ENCODE measurements at regions of chr4 and their contacts with region 1.

Region 1: GRCh38 chr4:146029939-146030710 is 91.5 kb upstream of the ZNF827 start:
- DNase-seq: peak; percentile 35
- ATAC-seq: peak; percentile 97
- H3K4me3 Mint-ChIP-seq: peak overlapping the region; percentile 63
- H3K27ac Mint-ChIP-seq: peak overlapping the region; percentile 86
- H3K4me1 Mint-ChIP-seq: peaks cover 51% of the 10 kb centered on the region
- H3K27me3 Mint-ChIP-seq: no peaks in the 10 kb centered on the region
- CTCF ChIP-seq: no peak

Region 2: GRCh38 chr4:145565328-145565727 is 464.8 kb before region 1 on chr4:
- CTCF ChIA-PET with region 1: no interaction called
- POLR2A ChIA-PET with region 1: no interaction called
- intact Hi-C with region 1: no loop called
- DNase-seq: no peak
- ATAC-seq: no peak
- H3K4me3 Mint-ChIP-seq: no peak overlapping the region
- H3K27ac Mint-ChIP-seq: no peak overlapping the region
- H3K4me1 Mint-ChIP-seq: no peaks in the 10 kb centered on the region
- H3K27me3 Mint-ChIP-seq: peaks cover 29% of the 10 kb centered on the region
- CTCF ChIP-seq: no peak

Region 3: DNA sequence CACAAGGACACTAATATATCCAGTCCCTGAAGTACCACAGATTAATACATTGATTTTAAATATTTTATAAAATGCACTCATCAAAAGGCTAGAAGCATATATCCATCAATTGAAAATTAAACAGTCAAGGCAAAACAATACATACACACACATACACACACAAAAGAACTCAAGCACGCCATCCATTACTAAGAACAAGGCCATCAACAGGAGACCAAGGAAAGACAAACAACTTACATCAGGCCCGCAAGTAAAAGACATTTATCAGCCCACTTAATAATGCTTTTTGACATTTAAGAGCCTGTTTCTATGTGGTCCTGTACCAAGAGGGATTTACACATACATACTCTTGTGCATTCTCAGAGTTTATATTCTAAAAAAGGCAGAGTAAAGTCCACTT is 41.5 kb before region 1 on chr4:
- CTCF ChIA-PET with region 1: no interaction called
- POLR2A ChIA-PET with region 1: no interaction called
- intact Hi-C with region 1: loop called (anchors 5 kb)
- DNase-seq: no peak
- ATAC-seq: no peak
- H3K4me3 Mint-ChIP-seq: no peak overlapping the region
- H3K27ac Mint-ChIP-seq: no peak overlapping the region
- H3K4me1 Mint-ChIP-seq: no peaks in the 10 kb centered on the region
- H3K27me3 Mint-ChIP-seq: no peaks in the 10 kb centered on the region
- CTCF ChIP-seq: no peak

Region 4: DNA sequence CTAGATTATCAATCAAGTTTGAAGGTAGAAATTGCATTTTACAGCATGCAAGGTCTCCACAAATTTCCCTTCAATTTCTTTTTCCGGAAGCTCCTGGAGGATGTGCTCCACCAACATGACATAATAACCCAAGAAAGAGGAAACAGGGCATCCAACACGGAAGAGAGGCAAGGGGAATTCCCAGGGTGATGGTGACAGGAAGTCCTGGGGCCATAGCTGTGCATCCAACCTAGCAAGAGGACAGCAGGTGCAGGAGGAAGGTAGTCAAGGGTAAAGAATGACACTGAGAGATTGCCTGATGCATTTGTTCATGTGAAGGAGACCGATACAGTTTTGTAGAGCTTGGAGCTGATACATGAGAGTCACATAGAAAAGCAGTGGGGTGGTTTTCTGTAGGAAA is 29.7 kb after region 1 on chr4:
- CTCF ChIA-PET with region 1: interaction called, 13 read pairs
- POLR2A ChIA-PET with region 1: interaction called, 34 read pairs
- intact Hi-C with region 1: loop called (anchors 1 kb)
- DNase-seq: peak; percentile 45
- ATAC-seq: peak; percentile 91
- H3K4me3 Mint-ChIP-seq: no peak overlapping the region
- H3K27ac Mint-ChIP-seq: no peak overlapping the region
- H3K4me1 Mint-ChIP-seq: peaks cover 39% of the 10 kb centered on the region
- H3K27me3 Mint-ChIP-seq: no peaks in the 10 kb centered on the region
- CTCF ChIP-seq: no peak

Region 5: DNA sequence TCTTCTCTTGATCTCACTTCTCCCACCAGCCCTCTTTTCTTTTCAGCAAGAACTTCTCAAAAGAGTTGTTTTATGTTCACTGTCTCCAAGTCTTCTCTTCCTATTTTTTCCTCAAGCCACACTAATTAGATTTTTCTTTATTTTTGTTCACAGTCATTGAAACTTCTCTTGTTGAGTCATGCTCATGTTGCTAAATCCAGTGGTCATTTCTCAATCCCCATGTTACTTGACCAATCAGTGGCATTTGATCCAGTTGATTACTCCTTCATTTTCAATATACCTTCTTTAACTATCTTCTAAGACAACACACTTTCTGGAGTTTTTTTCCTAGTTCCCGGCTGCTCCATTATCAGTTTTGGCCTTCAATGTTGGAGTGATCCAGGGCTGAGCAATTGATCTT is 42.3 kb after region 1 on chr4:
- CTCF ChIA-PET with region 1: no interaction called
- POLR2A ChIA-PET with region 1: no interaction called
- intact Hi-C with region 1: no loop called
- DNase-seq: no peak
- ATAC-seq: no peak
- H3K4me3 Mint-ChIP-seq: no peak overlapping the region
- H3K27ac Mint-ChIP-seq: no peak overlapping the region
- H3K4me1 Mint-ChIP-seq: no peaks in the 10 kb centered on the region
- H3K27me3 Mint-ChIP-seq: peaks cover 4% of the 10 kb centered on the region
- CTCF ChIP-seq: no peak

Region 6: GRCh38 chr4:146243141-146243882 is 213.2 kb after region 1 on chr4:
- CTCF ChIA-PET with region 1: no interaction called
- POLR2A ChIA-PET with region 1: no interaction called
- intact Hi-C with region 1: loop called (anchors 1 kb)
- DNase-seq: peak; percentile 33
- ATAC-seq: peak; percentile 78
- H3K4me3 Mint-ChIP-seq: no peak overlapping the region
- H3K27ac Mint-ChIP-seq: no peak overlapping the region
- H3K4me1 Mint-ChIP-seq: peaks cover 12% of the 10 kb centered on the region
- H3K27me3 Mint-ChIP-seq: no peaks in the 10 kb centered on the region
- CTCF ChIP-seq: no peak

Region 7: DNA sequence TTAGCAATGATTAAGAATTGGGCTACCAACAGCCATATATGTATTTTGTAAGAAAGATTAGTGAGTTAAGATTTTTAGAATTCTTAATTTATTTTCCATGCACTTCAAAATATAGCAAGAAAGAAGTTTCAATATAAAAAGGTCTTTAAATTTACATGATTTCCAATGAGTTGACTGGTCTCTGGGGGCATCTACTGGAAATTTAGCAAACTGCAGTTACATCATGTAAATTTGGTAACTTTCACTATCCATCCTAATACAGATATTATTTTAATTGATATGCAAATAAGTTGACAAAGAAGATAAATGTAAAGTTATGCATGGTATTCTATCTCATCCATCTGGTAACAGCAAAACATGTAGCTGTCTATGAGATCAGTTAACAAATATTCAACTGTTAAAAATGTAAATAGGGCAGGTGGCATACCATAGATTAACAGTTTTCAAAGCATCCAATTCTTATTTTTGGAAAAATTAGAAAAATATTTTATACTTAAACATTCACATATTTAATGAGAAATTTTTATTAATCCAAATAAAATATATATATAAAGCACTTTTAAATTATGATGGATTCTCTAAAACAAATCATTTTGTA is 886.5 kb after region 1 on chr4:
- CTCF ChIA-PET with region 1: interaction called, 3 read pairs
- POLR2A ChIA-PET with region 1: no interaction called
- intact Hi-C with region 1: loop called (anchors 1 kb)
- DNase-seq: no peak
- ATAC-seq: no peak
- H3K4me3 Mint-ChIP-seq: no peak overlapping the region
- H3K27ac Mint-ChIP-seq: no peak overlapping the region
- H3K4me1 Mint-ChIP-seq: no peaks in the 10 kb centered on the region
- H3K27me3 Mint-ChIP-seq: peaks cover 8% of the 10 kb centered on the region
- CTCF ChIP-seq: no peak

Measured in activated B cell treated with CpG ODN at 0.5 μM for 24 hours (primary cell).